PC-3 (cell line): ENCODE measurements at regions of chr12 and their contacts with region 1.

Region 1: DNA sequence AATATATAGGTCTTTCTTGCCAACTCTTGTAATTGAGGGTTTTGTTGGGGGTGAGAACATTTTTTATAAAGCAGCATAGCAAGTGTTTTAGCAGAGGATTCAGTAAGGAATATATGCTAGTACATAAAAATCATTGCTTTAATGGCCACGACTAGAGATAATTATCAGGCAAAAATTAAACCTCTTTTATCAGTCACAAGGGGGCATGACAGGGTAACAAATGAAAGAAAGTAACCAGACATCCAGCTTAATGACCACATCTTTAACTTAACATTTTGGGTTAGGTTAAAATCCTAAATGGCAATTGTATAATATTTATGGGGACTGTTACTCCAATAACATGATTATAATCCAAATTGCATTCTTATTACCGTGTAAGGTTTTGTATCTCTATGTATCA is 119.6 kb downstream of the LRRIQ1 start:
- DNase-seq: peak; percentile 46
- ATAC-seq: peak; percentile 77
- H3K4me3 ChIP-seq: no peak overlapping the region
- H3K27ac ChIP-seq: no peak overlapping the region
- H3K4me1 ChIP-seq: no peaks in the 10 kb centered on the region
- H3K27me3 ChIP-seq: no peaks in the 10 kb centered on the region
- CTCF ChIP-seq: peak; percentile 63

Region 2: DNA sequence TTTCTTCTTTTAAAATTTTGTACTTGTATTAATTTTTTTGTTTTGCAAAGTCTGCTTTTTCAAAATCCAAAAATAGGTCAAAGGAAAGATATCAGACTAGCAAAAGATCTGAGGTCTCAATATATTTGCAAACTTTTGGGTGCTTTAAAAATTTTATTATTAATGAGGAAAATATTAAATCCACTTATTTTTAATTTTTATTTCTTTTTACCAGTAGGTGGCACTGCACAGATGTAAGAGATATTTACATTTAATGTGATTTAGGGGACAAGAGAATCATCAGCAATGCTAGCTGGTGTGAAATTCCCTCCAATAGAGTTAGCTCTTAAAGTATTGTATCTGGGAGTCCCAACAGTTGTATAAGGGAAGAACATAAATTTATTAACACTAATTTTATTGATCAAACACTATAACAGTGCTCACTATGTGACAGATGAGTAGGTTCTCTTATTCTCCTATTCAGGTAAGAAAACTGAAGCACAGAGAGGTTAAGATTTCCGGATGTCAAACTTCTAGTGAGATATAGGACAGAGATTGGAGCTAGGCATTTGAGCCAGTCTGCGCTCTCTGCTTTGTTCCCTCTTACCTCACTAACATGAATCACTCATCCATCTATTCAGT is 154.8 kb after region 1 on chr12:
- CTCF ChIA-PET with region 1: no interaction called
- POLR2A ChIA-PET with region 1: no interaction called
- intact Hi-C with region 1: loop called (anchors 2 kb)
- DNase-seq: peak; percentile 45
- ATAC-seq: peak; percentile 18; the same call in 1 of the 2 replicates
- H3K4me3 ChIP-seq: no peak overlapping the region
- H3K27ac ChIP-seq: no peak overlapping the region
- H3K4me1 ChIP-seq: no peaks in the 10 kb centered on the region
- H3K27me3 ChIP-seq: peaks cover 17% of the 10 kb centered on the region
- CTCF ChIP-seq: peak; percentile 51; the same call in 1 of the 2 replicates

Region 3: DNA sequence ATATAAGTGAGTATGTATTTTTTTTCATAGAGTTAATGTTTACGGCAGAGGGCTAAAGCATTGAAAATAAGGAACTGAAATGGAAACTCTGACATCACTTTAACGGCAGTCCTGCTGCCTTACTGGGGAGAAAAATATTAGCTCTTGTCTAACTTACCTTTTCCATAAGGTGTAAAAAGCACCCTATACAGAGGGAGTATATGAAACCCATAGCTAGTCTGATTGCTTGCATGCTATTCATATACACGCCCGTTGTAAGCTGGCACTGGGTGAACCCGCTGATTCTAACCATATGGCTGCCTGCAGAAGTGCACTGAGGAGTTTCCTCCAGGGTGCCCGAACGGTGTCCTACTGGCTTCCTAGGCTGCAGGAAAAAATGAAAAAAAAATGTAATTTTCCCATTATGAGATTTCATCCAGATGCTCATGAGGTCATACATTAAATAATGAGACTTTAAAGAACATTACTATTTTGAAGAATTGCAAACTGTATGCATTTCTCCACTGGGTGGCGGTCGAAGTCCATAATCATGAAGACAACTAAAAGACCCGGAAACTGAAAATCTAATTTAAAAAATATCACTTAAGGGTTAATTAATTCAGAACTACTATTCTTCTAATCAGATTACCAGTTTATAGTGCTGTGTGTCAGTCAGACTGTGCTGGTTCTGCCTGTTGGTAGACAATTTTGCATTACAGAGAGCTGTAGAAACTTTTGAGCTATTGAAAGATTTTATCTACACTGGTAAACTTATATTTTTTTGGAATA is 269.0 kb after region 1 on chr12:
- CTCF ChIA-PET with region 1: no interaction called
- POLR2A ChIA-PET with region 1: no interaction called
- intact Hi-C with region 1: loop called (anchors 1 kb)
- DNase-seq: peak; percentile 66
- ATAC-seq: peak; percentile 72
- H3K4me3 ChIP-seq: no peak overlapping the region
- H3K27ac ChIP-seq: no peak overlapping the region
- H3K4me1 ChIP-seq: no peaks in the 10 kb centered on the region
- H3K27me3 ChIP-seq: peaks cover 21% of the 10 kb centered on the region; the same call in 1 of the 2 replicates
- CTCF ChIP-seq: peak; percentile 81

Region 4: DNA sequence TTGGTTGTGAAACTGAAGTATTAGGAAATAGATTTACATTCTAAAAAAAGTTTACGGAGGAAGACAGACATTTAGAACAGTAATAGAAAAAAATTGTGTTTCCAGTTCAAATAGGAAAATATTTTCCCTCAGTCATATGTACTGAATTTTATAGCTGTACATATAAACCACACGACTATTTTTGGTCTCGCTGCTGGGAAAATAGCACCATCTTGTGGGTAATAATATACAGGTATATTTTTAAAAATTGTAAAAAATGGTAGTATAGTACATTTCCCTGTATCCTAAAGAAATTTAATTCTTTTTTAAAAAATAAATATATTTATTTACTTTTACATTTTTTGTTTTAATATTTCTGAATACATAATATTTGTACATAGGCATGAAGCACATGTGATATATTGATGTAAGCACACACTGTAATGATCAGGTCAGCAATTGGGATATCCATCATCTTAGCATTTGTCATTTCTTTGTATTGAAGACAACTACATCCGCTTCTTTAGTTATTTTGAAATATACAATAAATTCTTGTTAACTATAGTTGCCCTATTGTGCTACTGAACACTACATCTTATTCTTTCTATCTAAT is 292.9 kb after region 1 on chr12:
- CTCF ChIA-PET with region 1: interaction called, 6 read pairs
- POLR2A ChIA-PET with region 1: no interaction called
- intact Hi-C with region 1: loop called (anchors 1 kb)
- DNase-seq: peak; percentile 56
- ATAC-seq: no peak
- H3K4me3 ChIP-seq: no peak overlapping the region
- H3K27ac ChIP-seq: no peak overlapping the region
- H3K4me1 ChIP-seq: no peaks in the 10 kb centered on the region
- H3K27me3 ChIP-seq: no peaks in the 10 kb centered on the region
- CTCF ChIP-seq: peak; percentile 57